GM13976 (cell line): ENCODE measurements at regions of chr1 and their contacts with region 1.

Region 1: GRCh38 chr1:179105350-179105749 is 23.5 kb downstream of the TOR3A start:
- DNase-seq: no peak
- CTCF ChIP-seq: no peak

Region 2: DNA sequence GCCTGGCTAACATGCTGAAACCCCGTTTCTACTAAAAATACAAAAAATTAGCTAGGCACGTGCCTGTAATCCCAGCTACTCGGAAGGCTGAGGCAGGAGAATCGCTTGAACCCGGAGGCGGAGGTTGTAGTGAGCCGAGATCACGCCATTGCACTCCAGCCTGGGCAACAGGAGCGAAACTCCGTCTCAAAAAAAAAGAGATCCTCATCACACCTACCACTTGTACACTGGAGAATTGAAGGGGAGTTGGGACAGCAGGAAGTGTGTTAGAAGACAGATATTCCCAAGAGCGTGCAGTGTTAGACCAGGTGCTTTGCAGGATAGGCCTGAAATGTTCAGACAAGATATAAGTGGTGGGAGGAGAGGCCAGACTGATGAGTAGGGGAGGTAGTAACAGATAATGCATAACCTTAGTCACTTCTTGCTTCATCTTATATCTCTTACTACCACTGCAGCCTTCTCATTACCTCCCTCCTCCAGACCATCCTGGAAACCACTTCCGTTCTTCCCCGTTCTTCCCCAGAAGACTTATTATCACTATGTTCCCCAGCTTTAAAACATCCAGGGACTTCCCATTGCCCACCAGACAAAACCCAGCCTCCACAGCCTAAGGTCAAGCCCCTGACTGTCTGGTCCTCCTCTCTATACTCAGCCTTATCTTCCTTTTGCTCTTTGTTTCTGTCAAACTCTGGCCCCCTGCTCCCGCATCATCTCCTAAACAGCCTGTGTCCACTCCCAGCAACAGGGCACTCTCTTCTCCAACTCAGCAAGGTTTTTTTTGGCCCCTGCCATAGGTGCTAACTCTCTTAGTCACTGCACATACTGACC is 58.3 kb before region 1 on chr1:
- in situ Hi-C with region 1: loop called (anchors 10 kb)
- DNase-seq: no peak
- CTCF ChIP-seq: no peak

Region 3: GRCh38 chr1:179206812-179207211 is 101.5 kb after region 1 on chr1:
- in situ Hi-C with region 1: loop called (anchors 10 kb)
- DNase-seq: no peak
- CTCF ChIP-seq: no peak

Region 4: DNA sequence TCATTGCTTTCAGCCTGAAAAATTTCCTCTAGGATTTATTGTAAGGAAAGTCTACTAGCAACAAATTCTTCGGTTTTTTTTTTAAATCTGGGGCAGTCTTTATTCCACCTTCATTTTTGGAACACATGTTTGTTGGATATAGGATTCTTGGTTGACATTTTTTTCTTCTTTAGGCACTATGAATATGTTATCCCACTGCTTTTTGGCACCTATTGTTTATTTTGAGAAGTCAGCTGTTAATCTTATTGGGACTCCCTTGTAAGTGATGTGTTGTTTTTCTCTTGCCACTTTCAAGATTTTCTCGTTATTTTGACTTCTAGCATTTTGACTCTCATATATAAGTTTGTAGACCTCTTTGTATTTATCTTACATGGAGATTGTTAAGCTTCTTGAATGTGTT is 371.1 kb after region 1 on chr1:
- in situ Hi-C with region 1: no loop called
- DNase-seq: no peak
- CTCF ChIP-seq: no peak